ENCODE measurements at regions of chr4 and their contacts with region 1.

Region 1: GRCh38 chr4:78809928-78810835 is 34.0 kb downstream of the BMP2K start:
- DNase-seq: peak in 3 of 4 experiments; percentile 16 to 64 (median 49)
- ATAC-seq: peak; percentile 88
- H3K4me3 ChIP-seq: no peak overlapping the region
- H3K27ac ChIP-seq: peak overlapping the region; percentile 63
- H3K4me1 ChIP-seq: peaks cover 3 to 32% of the 10 kb centered on the region in 2 experiments; a peak in 4 of 5 replicates
- H3K27me3 ChIP-seq: no peaks in the 10 kb centered on the region
- CTCF ChIP-seq: no peak
- EP300 ChIP-seq: no peak
- POLR2A ChIP-seq: no peak
- RAD21 ChIP-seq: peak in 1 of 2 experiments; percentile 9; a peak in 1 of 4 replicates

Region 2: GRCh38 chr4:78796526-78796925 is 13.7 kb before region 1 on chr4:
- CTCF ChIA-PET with region 1: no interaction called
- POLR2A ChIA-PET with region 1: interaction called, 11 read pairs
- in situ Hi-C with region 1: no loop called
- intact Hi-C with region 1: no loop called
- DNase-seq: no peak
- ATAC-seq: no peak
- H3K4me3 ChIP-seq: no peak overlapping the region
- H3K27ac ChIP-seq: no peak overlapping the region; the same call in 2 of the 3 replicates
- H3K4me1 ChIP-seq: peaks cover 0 to 21% of the 10 kb centered on the region in 2 experiments; a peak in 3 of 5 replicates
- H3K27me3 ChIP-seq: no peaks in the 10 kb centered on the region
- CTCF ChIP-seq: no peak
- EP300 ChIP-seq: no peak
- POLR2A ChIP-seq: 0 out of 2 replicates have a peak, but pooled peaks have one; percentile 0
- RAD21 ChIP-seq: no peak

Measured in K562 (cell line).